ENCODE measurements at regions of chr2 and their contacts with region 1.

Region 1: GRCh38 chr2:163984988-163985387 is 249.2 kb upstream of the FIGN start:
- DNase-seq: no peak

Region 2: DNA sequence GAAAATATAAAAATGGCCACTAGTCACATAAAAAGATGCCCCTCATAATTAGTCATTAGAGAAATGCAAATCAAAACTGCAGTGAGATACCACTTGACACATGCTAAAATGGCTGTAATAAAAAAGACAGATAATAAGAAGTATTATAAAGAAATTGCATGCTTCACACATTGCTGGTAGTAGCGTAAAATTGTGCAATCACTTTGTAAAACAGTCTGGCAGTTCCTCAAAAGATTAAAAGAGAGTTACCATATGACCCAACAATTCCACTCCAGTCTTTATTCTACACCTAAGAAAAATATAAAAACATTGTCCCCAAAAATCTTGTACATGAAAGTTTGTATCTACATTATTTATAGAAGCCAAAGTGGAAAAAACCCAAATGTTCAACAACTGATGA is 78.6 kb before region 1 on chr2:
- in situ Hi-C with region 1: loop called (anchors 5 kb)
- DNase-seq: no peak

Region 3: DNA sequence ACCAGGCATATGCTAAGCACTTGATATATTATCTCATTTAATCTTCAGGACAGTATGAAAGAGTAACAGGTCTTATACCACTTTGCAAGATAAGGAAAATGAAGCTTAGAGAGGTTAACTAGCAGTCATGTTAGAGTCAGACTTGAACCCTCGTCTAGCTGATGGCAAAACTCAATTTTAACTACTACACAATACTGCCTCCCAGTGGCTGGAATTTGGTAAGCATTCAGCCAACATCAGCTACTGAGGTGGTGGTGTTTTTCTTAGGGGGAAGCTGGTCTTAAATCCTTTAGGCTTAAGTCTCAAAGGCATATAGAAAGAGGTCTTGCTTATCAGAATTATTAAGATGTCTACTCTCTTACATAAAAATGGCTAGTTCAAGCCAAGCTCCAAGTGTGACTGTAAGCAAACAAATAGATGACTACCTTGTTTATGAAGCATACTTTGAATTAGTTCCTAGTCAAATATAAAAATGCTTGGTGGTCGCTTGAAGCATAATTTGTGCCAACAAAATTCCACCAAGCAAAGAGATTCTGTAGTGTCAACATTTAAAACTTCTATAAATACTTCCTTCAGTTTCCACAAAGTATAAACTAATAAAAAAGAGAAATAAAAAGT is 76.2 kb after region 1 on chr2:
- in situ Hi-C with region 1: loop called (anchors 5 kb)
- DNase-seq: peak; percentile 8

Region 4: GRCh38 chr2:164538240-164538866 is 553.4 kb after region 1 on chr2:
- in situ Hi-C with region 1: no loop called
- DNase-seq: peak; percentile 11